Heart left ventricle (tissue), 16 donors: ENCODE measurements at regions of chr1 and their contacts with region 1.

Region 1: DNA sequence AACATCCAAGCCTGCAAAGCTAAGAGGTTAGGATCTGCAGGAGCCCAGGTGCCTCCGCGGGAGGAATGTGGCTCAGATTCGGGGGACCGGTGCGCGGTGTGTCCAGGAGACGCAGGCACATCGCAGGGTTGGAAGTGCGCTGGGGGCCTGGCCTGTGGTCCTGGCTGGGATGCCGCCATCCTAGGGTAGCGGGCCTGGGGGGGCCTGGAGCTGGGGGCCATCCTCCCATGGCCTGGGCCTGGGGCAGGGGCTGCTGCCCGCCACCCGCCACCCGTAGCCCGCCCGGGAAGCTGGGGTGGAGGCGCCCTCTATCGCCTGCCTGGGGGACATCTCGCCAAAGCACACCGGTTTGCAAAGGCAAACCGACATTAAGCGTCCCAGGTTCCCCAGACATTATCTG is 170.6 kb upstream of the ARHGEF16 start:
- DNase-seq: peak in 4 of 5 donors; percentile 44 to 58 (median 55)
- ATAC-seq: peak; percentile 58 to 82 (median 73)
- H3K4me3 ChIP-seq: peak overlapping the region in 3 of 12 donors; percentile 16 to 25 (median 20)
- H3K27ac ChIP-seq: peak overlapping the region in 8 of 12 donors; percentile 31 to 61 (median 58)
- H3K4me1 ChIP-seq: peaks cover 0 to 28% (median 4%) of the 10 kb centered on the region in 12 donors
- H3K27me3 ChIP-seq: peaks cover 0 to 13% (median 0%) of the 10 kb centered on the region in 9 donors
- CTCF ChIP-seq: peak; percentile 43 to 83 (median 75)
- POLR2A ChIP-seq: no peak

Region 2: GRCh38 chr1:3012456-3013291 is 271.2 kb before region 1 on chr1:
- intact Hi-C with region 1: loop called in 6 of 10 experiments (anchors 2 to 10 kb)
- DNase-seq: peak; percentile 35 to 81 (median 42)
- ATAC-seq: peak in 3 of 4 donors; percentile 74 to 88 (median 79)
- H3K4me3 ChIP-seq: no peak overlapping the region
- H3K27ac ChIP-seq: no peak overlapping the region
- H3K4me1 ChIP-seq: peaks cover 0 to 7% (median 0%) of the 10 kb centered on the region in 12 donors
- H3K27me3 ChIP-seq: peaks cover 0 to 41% (median 6%) of the 10 kb centered on the region in 9 donors
- CTCF ChIP-seq: peak; percentile 74 to 96 (median 80)
- POLR2A ChIP-seq: no peak

Region 3: DNA sequence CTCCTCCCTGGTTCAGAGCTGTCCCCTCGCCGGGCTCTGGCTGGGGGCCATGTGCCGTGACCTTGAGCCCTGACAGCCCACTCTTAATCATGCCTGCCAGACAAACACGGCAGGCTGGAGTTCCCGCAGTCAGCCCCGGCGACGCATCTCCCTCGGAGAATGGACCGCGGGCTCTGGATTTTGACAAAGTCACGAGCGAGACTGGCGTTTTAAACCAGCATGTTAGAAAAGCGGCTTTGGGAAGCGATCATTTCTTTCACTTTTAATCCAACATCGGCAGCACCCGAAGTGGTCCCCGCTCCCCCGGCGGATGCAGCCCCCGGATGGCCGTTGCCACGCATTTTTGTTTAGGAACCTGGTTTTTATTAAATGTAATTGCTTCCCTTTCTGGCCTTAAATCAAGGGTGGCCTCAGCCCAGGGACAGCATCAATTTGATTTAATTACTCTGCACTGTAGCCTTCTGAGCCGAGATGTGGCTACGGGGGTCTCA is 143.9 kb before region 1 on chr1:
- intact Hi-C with region 1: no loop called
- DNase-seq: no peak
- ATAC-seq: peak in 2 of 4 donors; percentile 22 to 23
- H3K4me3 ChIP-seq: no peak overlapping the region
- H3K27ac ChIP-seq: peak overlapping the region in 2 of 12 donors; percentile 17 to 44
- H3K4me1 ChIP-seq: peaks cover 0 to 65% (median 12%) of the 10 kb centered on the region in 12 donors
- H3K27me3 ChIP-seq: peaks cover 0 to 9% (median 0%) of the 10 kb centered on the region in 9 donors
- CTCF ChIP-seq: no peak
- POLR2A ChIP-seq: no peak

Region 4: DNA sequence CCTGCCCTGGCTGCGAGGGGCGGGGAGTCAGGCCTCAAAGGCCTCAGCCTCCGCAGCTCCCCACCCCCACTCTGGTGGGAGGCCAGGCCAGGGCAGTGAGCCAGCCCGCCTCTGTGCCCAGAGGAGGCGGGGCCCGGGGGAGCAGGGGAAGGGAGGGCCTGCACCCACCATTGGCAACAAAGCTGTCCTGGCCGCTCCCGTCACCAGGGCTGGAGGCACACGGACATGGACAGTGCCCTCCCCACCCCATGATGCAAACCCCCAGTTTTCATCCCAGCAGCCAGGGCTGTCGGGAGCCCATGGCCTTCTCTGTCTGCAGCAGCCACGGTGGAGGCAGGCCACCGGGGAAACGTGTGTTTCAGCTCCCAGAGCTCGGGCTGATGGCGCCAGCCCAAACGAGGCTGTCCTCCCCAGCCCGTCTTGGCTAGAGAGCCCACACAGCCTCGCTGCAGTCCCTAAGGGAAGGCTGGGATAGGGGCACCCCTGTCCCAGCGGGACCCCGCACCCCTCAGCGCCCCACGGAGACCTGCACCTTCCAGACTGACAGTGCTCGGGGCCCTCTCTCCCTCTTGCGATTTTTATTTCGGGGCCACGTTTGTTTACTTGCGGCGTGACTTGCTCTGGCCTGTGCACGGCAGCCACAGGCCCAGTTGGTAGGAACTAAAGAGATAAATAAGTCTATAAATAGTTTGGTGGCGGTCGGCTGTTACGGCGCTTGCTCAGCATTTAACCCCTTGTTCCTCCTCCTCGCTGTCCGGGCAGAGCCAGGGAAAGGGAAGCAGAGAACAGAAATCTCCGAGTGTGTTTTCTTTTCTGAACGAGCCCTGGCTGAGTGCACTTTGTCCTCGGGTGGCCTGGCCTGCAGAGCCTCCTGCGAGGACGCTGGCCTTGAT is 113.0 kb before region 1 on chr1:
- intact Hi-C with region 1: loop called in 3 of 10 experiments (anchors 5 to 10 kb)
- DNase-seq: peak; percentile 85 to 92 (median 85)
- ATAC-seq: peak; percentile 82 to 92 (median 87)
- H3K4me3 ChIP-seq: peak overlapping the region in 11 of 12 donors; percentile 22 to 58 (median 44)
- H3K27ac ChIP-seq: peak overlapping the region; percentile 71 to 98 (median 89)
- H3K4me1 ChIP-seq: peaks cover 7 to 73% (median 53%) of the 10 kb centered on the region in 12 donors
- H3K27me3 ChIP-seq: peaks cover 0 to 4% (median 0%) of the 10 kb centered on the region in 9 donors
- CTCF ChIP-seq: no peak
- POLR2A ChIP-seq: no peak

Region 5: DNA sequence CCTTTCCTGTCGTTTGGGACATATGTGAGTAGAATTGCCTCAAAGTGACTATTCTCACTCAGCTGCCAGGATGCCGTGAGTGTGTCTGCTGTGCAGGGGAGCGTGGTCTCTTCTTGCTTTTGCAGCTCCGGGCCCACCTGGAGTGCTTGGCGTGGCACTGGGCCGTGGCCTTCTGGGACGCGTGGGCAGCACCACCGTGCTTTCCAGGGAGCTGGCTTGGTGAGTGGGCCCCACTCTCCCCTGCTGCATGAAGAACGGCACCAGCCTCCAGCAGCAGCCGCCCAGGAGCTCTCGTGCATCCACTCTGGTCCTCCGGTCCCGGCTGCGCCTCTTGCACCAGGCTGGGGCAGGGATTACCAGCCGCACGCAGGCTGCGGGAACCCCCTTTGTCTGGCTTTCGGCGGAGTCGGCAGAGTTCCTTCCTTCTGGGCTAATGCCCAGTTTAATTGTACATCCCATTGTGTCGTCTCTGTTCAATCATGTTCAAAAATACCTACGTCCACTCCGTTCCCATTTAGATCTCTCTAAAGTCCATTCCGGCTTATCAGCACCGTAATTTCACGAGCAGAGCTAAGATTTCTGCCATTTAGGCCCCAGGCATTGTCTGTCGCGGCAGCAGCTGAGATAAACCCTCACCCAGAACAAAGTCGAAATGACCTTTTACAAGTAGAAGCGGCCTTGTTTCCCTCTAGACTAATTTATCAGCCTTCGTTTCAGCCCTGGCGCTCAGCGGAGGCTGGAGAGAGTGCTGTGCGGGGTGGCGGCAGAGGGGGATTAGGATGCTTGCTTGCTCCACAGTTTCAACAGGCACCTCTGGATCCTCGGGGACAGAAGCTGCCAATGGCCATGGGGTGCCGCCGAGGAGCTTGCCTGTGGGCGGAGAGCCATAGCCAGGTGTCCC is 85.2 kb before region 1 on chr1:
- intact Hi-C with region 1: loop called in 1 of 10 experiments (anchors 5 kb)
- DNase-seq: no peak
- ATAC-seq: peak in 2 of 4 donors; percentile 23 to 60
- H3K4me3 ChIP-seq: no peak overlapping the region
- H3K27ac ChIP-seq: peak overlapping the region in 7 of 12 donors; percentile 11 to 65 (median 34)
- H3K4me1 ChIP-seq: peaks cover 0 to 45% (median 21%) of the 10 kb centered on the region in 12 donors
- H3K27me3 ChIP-seq: no peaks in the 10 kb centered on the region
- CTCF ChIP-seq: no peak
- POLR2A ChIP-seq: no peak

Region 6: DNA sequence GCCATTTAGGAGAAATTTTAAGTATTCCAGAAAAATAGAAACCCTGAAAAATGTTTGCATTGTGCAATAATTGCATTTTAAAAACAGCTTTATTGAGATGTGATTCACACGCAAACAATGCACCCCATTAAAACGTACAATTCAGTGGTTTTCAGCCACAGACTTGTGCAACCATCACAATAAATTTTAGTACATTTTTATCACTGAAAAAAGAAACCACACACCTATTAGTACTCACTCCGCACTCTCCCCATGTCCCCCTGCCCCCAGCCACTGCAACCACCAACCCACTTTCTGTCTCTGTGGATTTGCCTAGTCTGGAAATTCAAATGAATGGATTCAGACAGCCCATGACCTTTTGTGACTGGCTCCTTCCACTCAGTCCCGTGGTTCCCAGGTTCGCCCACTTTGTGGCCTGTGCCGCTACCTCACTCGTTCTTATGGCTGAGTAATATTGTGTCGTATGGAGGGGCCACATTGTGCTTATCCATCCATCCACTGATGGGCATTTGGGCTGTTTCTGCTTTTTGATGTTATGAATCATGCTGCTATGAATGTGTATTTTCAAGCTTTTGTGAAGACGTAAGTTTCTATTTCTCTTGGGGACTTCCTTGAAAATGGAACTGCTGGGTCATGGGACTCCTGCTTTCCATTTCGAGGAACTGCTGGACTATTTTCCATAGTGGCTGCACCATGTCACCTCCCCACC is 22.9 kb after region 1 on chr1:
- intact Hi-C with region 1: no loop called
- DNase-seq: no peak
- ATAC-seq: no peak
- H3K4me3 ChIP-seq: no peak overlapping the region
- H3K27ac ChIP-seq: peak overlapping the region in 2 of 12 donors; percentile 5 to 52
- H3K4me1 ChIP-seq: peaks cover 0 to 55% (median 15%) of the 10 kb centered on the region in 12 donors
- H3K27me3 ChIP-seq: peaks cover 0 to 4% (median 0%) of the 10 kb centered on the region in 9 donors
- CTCF ChIP-seq: no peak
- POLR2A ChIP-seq: no peak

Region 7: DNA sequence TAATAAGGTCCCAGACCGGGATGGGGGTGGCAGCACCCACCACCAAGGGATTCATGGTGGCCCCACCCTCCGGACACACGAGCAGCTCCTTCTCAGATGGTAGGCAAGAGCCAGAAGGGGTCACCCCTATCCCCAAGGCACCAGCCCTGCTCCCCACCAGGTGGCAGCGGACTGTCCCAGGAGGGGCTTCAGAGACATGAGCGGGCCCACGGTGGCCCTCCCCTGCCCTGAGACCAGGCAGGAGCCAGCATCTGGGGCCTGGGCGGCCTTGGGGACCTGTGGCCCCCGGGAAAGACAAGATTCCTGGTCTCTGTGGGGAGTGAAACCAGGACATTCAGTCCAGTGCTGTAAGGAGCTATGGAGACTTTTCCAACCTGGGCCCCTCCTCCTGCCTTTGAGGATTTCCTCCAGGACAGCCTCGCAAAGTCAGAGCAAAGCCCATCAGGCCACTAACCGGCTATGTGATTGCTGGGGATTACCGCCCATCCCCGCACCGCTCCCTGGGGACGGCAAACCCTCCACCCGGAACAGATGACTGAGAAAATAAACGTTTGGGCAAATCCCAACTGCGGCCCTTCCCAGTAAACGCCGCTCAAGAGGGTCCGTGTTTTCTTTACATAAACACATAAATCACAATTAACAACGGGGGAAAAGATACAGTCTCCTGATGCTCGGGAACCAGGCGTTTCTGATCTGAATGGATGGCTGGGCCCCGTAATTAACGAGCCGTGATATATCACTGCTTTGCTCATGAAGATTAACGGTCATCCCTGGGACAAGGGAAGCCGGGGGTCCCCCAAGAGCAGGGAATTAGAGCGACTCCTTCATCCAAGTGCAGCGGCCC is 119.8 kb after region 1 on chr1:
- intact Hi-C with region 1: loop called in 1 of 10 experiments (anchors 10 kb)
- DNase-seq: no peak
- ATAC-seq: no peak
- H3K4me3 ChIP-seq: no peak overlapping the region
- H3K27ac ChIP-seq: no peak overlapping the region
- H3K4me1 ChIP-seq: peaks cover 0 to 20% (median 5%) of the 10 kb centered on the region in 12 donors
- H3K27me3 ChIP-seq: no peaks in the 10 kb centered on the region
- CTCF ChIP-seq: peak in 4 of 12 donors; percentile 8 to 21 (median 16)
- POLR2A ChIP-seq: no peak

Region 8: GRCh38 chr1:3410142-3410925 is 126.5 kb after region 1 on chr1:
- intact Hi-C with region 1: loop called in 2 of 10 experiments (anchors 10 kb)
- DNase-seq: peak in 4 of 5 donors; percentile 64 to 78 (median 67)
- ATAC-seq: peak; percentile 73 to 90 (median 81)
- H3K4me3 ChIP-seq: no peak overlapping the region
- H3K27ac ChIP-seq: peak overlapping the region in 1 of 12 donors; percentile 11
- H3K4me1 ChIP-seq: peaks cover 0 to 26% (median 5%) of the 10 kb centered on the region in 12 donors
- H3K27me3 ChIP-seq: no peaks in the 10 kb centered on the region
- CTCF ChIP-seq: peak; percentile 44 to 81 (median 70)
- POLR2A ChIP-seq: no peak

Region 9: GRCh38 chr1:3423245-3423829 is 139.5 kb after region 1 on chr1:
- intact Hi-C with region 1: loop called in 2 of 10 experiments (anchors 5 to 10 kb)
- DNase-seq: peak; percentile 86 to 95 (median 90)
- ATAC-seq: peak; percentile 91 to 96 (median 92)
- H3K4me3 ChIP-seq: peak overlapping the region in 1 of 12 donors; percentile 44
- H3K27ac ChIP-seq: peak overlapping the region; percentile 39 to 95 (median 83)
- H3K4me1 ChIP-seq: peaks cover 11 to 41% (median 31%) of the 10 kb centered on the region in 12 donors
- H3K27me3 ChIP-seq: no peaks in the 10 kb centered on the region
- CTCF ChIP-seq: no peak
- POLR2A ChIP-seq: peak in 1 of 2 donors; percentile 22